ENCODE measurements at regions of chr10 and their contacts with region 1.

Region 1: DNA sequence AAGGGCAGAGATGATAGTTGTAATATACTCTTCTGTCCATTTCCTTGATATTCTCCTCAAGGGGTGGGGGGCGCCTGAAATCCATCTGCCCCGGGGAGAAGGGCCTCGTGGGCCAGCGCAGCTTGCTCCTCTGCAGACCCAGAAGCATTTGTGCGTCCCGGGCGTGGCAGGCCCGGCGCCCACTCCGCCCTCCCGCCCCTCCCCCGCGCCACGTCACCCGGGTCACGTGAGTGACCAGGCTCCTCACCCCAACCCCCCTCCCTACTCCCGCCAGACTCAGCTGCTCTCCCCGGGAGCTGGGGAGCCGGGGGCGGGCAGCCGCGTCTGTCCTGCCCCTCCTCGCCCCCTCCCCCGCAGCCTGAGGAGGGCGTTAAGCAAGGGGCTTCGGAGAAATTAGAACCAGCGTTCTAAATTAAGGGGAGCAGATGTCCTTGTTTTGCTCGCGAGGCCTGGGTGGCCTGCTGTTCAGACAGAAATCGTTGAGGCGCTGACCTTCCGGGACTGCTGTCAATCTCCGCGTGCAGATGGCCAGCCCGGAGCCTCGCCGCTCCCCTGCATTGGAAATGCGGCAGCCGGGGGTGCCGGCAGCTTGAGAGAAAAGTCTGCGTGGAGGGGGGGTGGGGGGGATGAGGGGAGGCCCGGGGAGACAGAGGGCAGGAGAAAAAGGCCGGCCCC is 102.1 kb upstream of the ZNF438 start:
- DNase-seq: peak; percentile 84
- ATAC-seq: peak; percentile 52
- H3K4me3 Mint-ChIP-seq: peak overlapping the region; percentile 75
- H3K27ac Mint-ChIP-seq: peak overlapping the region; percentile 55
- H3K4me1 Mint-ChIP-seq: peaks cover 42% of the 10 kb centered on the region
- H3K27me3 Mint-ChIP-seq: no peaks in the 10 kb centered on the region

Region 2: DNA sequence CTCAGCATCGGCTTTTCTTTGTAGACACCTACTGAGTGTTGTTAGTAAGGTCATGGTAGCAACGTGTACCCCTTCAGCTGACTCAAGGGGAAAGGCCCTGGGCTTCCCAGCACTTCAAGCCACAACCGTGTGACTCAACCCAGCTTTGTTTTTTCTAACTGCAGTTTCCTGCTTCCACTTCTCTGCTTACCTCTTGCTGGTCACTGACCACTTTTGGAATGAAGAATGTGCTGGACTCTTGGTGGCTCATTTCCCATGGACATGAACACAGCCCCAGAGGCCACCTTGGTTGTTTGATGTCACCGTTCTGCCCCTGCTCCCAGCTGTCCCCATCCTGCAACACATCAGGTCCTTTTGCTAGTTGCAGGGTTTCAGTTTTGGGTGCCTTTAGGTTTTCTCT is 32.6 kb before region 1 on chr10:
- CTCF ChIA-PET with region 1: interaction called, 4 read pairs
- POLR2A ChIA-PET with region 1: interaction called, 3 read pairs
- intact Hi-C with region 1: loop called (anchors 2 kb)
- DNase-seq: peak; percentile 86
- ATAC-seq: peak; percentile 96
- H3K4me3 Mint-ChIP-seq: no peak overlapping the region
- H3K27ac Mint-ChIP-seq: peak overlapping the region; percentile 91
- H3K4me1 Mint-ChIP-seq: peaks cover 44% of the 10 kb centered on the region
- H3K27me3 Mint-ChIP-seq: no peaks in the 10 kb centered on the region

Region 3: DNA sequence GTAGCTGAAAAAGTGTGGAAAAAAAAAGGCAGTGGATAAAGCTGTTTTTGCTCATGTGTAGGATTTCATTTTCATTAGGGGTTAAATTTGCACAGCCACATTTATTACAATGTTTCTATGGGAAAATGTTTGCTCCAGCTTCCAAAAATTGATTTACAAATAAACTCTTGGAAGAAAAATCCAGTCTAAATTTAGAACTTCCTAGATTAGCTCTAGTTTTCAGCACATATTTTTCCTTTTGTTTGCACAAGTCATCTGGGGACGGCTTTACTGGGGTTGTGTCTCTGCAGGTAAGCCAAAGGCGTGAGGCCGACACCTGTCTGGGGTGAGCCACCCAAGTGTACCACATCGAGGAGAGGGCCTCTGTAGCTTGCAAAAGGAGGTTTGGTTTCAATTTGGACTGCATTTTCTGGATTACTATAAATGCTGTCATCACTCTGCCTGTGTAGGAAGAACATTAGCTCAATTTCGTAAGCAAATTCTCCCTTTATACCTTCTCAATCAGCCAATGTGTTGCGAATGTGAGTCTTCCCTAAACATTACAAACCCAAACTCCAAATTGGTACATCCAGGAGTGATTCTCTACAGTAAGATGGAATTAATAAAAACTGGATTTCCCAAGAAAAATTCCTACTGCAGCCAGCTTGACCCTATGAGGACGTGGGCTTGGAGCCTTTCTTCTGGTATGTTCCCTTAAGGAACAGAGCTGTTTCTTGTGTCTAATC is 12.6 kb before region 1 on chr10:
- CTCF ChIA-PET with region 1: interaction called, 10 read pairs
- POLR2A ChIA-PET with region 1: no interaction called
- intact Hi-C with region 1: no loop called
- DNase-seq: no peak
- ATAC-seq: no peak
- H3K4me3 Mint-ChIP-seq: no peak overlapping the region
- H3K27ac Mint-ChIP-seq: no peak overlapping the region
- H3K4me1 Mint-ChIP-seq: peaks cover 34% of the 10 kb centered on the region
- H3K27me3 Mint-ChIP-seq: peaks cover 2% of the 10 kb centered on the region